ENCODE measurements at regions of chr15 and their contacts with region 1.

Region 1: GRCh38 chr15:41096178-41096577 is 19.9 kb downstream of the INO80 start:
- DNase-seq: no peak
- H3K4me3 ChIP-seq: no peak overlapping the region
- H3K27ac ChIP-seq: no peak overlapping the region
- H3K4me1 ChIP-seq: no peaks in the 10 kb centered on the region
- H3K27me3 ChIP-seq: no peaks in the 10 kb centered on the region
- CTCF ChIP-seq: no peak

Region 2: GRCh38 chr15:40982855-40983254 is 113.3 kb before region 1 on chr15:
- CTCF ChIA-PET with region 1: no interaction called
- POLR2A ChIA-PET with region 1: no interaction called
- intact Hi-C with region 1: loop called (anchors 10 kb)
- DNase-seq: no peak
- H3K4me3 ChIP-seq: no peak overlapping the region
- H3K27ac ChIP-seq: no peak overlapping the region
- H3K4me1 ChIP-seq: no peaks in the 10 kb centered on the region
- H3K27me3 ChIP-seq: no peaks in the 10 kb centered on the region
- CTCF ChIP-seq: no peak

Region 3: DNA sequence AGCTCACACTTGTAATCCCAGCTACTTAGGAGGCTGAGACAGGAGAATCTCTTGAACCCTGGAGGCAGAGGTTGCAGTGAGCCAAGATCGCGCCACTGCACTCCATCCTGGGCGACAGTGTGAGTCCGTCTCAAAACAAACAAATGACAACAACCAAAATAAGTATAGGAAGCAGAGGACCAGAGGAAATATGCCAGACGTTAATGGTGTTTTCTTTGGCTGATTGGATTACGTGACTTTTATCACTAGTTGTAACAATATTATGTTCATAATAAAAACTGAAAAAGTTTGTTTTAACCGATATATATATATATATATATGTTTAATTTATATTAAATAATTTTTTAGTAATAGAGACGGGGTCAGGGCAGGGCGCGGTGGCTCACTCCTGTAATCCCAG is 258.2 kb after region 1 on chr15:
- CTCF ChIA-PET with region 1: no interaction called
- POLR2A ChIA-PET with region 1: no interaction called
- intact Hi-C with region 1: no loop called
- DNase-seq: no peak
- H3K4me3 ChIP-seq: no peak overlapping the region
- H3K27ac ChIP-seq: no peak overlapping the region
- H3K4me1 ChIP-seq: no peaks in the 10 kb centered on the region
- H3K27me3 ChIP-seq: no peaks in the 10 kb centered on the region
- CTCF ChIP-seq: no peak